ENCODE measurements at regions of chr2 and their contacts with region 1.

Region 1: GRCh38 chr2:70516596-70516995 is 37.0 kb downstream of the TGFA start:
- H3K4me3 Mint-ChIP-seq: no peak overlapping the region
- H3K27ac Mint-ChIP-seq: peak overlapping the region; percentile 85
- H3K4me1 Mint-ChIP-seq: peaks cover 89% of the 10 kb centered on the region
- H3K27me3 Mint-ChIP-seq: no peaks in the 10 kb centered on the region

Region 2: GRCh38 chr2:69625078-69625795 is 891.4 kb before region 1 on chr2:
- intact Hi-C with region 1: no loop called
- H3K4me3 Mint-ChIP-seq: no peak overlapping the region
- H3K27ac Mint-ChIP-seq: no peak overlapping the region
- H3K4me1 Mint-ChIP-seq: peaks cover 19% of the 10 kb centered on the region
- H3K27me3 Mint-ChIP-seq: no peaks in the 10 kb centered on the region

Region 3: GRCh38 chr2:70440621-70441020 is 76.0 kb before region 1 on chr2:
- intact Hi-C with region 1: no loop called
- H3K4me3 Mint-ChIP-seq: no peak overlapping the region
- H3K27ac Mint-ChIP-seq: peak overlapping the region; percentile 42
- H3K4me1 Mint-ChIP-seq: peaks cover 9% of the 10 kb centered on the region
- H3K27me3 Mint-ChIP-seq: no peaks in the 10 kb centered on the region

Region 4: GRCh38 chr2:70472221-70472890 is 44.2 kb before region 1 on chr2:
- intact Hi-C with region 1: loop called (anchors 5 kb)
- H3K4me3 Mint-ChIP-seq: peak overlapping the region; percentile 30
- H3K27ac Mint-ChIP-seq: peak overlapping the region; percentile 91
- H3K4me1 Mint-ChIP-seq: peaks cover 86% of the 10 kb centered on the region
- H3K27me3 Mint-ChIP-seq: no peaks in the 10 kb centered on the region

Region 5: GRCh38 chr2:70527447-70528080 is 11.0 kb after region 1 on chr2:
- intact Hi-C with region 1: no loop called
- H3K4me3 Mint-ChIP-seq: no peak overlapping the region
- H3K27ac Mint-ChIP-seq: no peak overlapping the region
- H3K4me1 Mint-ChIP-seq: peaks cover 90% of the 10 kb centered on the region
- H3K27me3 Mint-ChIP-seq: no peaks in the 10 kb centered on the region

Region 6: GRCh38 chr2:70553584-70554337 is 37.2 kb after region 1 on chr2 and contains the start of gene TGFA:
- intact Hi-C with region 1: loop called (anchors 5 kb)
- H3K4me3 Mint-ChIP-seq: peak within 1 kb of the TSS; percentile 99
- H3K27ac Mint-ChIP-seq: peak within 1 kb of the TSS; percentile 95
- H3K4me1 Mint-ChIP-seq: peaks cover 55% of the 10 kb centered on the region
- H3K27me3 Mint-ChIP-seq: peaks cover 20% of the 10 kb centered on the region